ENCODE measurements at regions of chr12 and their contacts with region 1.

Region 1: GRCh38 chr12:104358347-104359003 is 54.9 kb downstream of the EID3 start:
- DNase-seq: peak in 2 of 3 donors; percentile 61 to 84
- ATAC-seq: peak; percentile 90
- H3K4me3 ChIP-seq: no peak overlapping the region
- H3K4me1 ChIP-seq: no peaks in the 10 kb centered on the region
- CTCF ChIP-seq: peak; percentile 87

Region 2: GRCh38 chr12:104201238-104202001 is 157.1 kb before region 1 on chr12:
- intact Hi-C with region 1: loop called (anchors 5 kb)
- DNase-seq: peak in 1 of 3 donors; percentile 55
- ATAC-seq: peak; percentile 56
- H3K4me3 ChIP-seq: no peak overlapping the region
- H3K4me1 ChIP-seq: no peaks in the 10 kb centered on the region
- CTCF ChIP-seq: peak; percentile 57

Measured in mucosa of descending colon (tissue), 3 donors.